ENCODE measurements at regions of chr18 and their contacts with region 1.

Region 1: DNA sequence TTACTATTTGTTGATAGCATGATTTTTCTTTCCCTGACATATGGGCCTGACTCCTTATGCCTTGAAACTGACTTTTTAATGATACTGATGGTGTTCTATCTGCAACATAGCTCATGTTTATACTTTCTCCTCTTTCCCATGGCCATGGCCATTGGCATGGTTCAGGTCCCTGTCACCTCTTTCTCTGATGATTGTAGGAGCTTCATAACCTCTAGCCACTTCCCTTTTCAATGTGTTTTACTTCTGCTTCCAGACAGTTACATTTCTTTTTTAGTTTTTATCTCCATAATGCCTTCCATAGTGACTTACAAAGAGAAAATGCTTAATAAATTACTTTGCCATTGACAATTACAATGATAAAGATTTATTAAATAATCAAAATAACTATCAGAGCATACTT is 177.9 kb upstream of the SETBP1 start:
- DNase-seq: no peak
- ATAC-seq: no peak
- H3K4me3 Mint-ChIP-seq: no peak overlapping the region
- H3K27ac Mint-ChIP-seq: peak overlapping the region; percentile 14
- H3K4me1 Mint-ChIP-seq: peaks cover 52% of the 10 kb centered on the region
- H3K27me3 Mint-ChIP-seq: no peaks in the 10 kb centered on the region
- CTCF ChIP-seq: no peak

Region 2: DNA sequence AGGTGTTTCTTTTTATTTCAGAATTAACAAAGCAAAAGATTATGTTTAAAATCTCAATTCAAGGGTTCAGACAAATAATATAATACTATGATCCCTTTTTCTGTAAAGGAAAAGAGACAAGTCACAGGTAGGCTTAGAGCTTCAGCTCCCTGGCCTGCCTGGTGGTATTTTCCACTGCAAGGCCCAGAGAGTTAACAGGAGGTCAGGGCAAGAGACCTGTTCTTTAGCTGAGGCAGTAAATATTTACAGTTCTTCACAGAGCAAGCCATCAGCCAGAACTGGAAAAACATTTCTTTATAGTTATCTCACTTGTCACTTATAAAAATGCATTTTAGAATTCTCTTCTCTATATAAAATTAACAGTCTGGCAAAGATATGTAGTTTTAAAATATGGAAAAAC is 1394.2 kb after region 1 on chr18:
- CTCF ChIA-PET with region 1: no interaction called
- POLR2A ChIA-PET with region 1: no interaction called
- intact Hi-C with region 1: loop called (anchors 5 kb)
- DNase-seq: no peak
- ATAC-seq: no peak
- H3K4me3 Mint-ChIP-seq: no peak overlapping the region
- H3K27ac Mint-ChIP-seq: no peak overlapping the region
- H3K4me1 Mint-ChIP-seq: no peaks in the 10 kb centered on the region
- H3K27me3 Mint-ChIP-seq: no peaks in the 10 kb centered on the region
- CTCF ChIP-seq: no peak